ENCODE measurements at regions of chr7 and their contacts with region 1.

Region 1: GRCh38 chr7:80659120-80660055 is 20.9 kb downstream of the CD36 start:
- DNase-seq: no peak
- H3K4me3 ChIP-seq: no peak overlapping the region
- H3K4me3 Mint-ChIP-seq: no peak overlapping the region
- H3K27ac Mint-ChIP-seq: no peak overlapping the region
- H3K4me1 ChIP-seq: no peaks in the 10 kb centered on the region
- H3K4me1 Mint-ChIP-seq: no peaks in the 10 kb centered on the region
- H3K27me3 ChIP-seq: no peaks in the 10 kb centered on the region
- H3K27me3 Mint-ChIP-seq: peaks cover 13% of the 10 kb centered on the region
- CTCF ChIP-seq: peak; percentile 25 to 43

Region 2: GRCh38 chr7:80511964-80512363 is 147.4 kb before region 1 on chr7 and contains the start of gene GNAT3:
- CTCF ChIA-PET with region 1: no interaction called
- POLR2A ChIA-PET with region 1: no interaction called
- intact Hi-C with region 1: loop called (anchors 5 kb)
- DNase-seq: no peak
- H3K4me3 ChIP-seq: no peak within 1 kb of the TSS
- H3K4me3 Mint-ChIP-seq: no peak within 1 kb of the TSS
- H3K27ac Mint-ChIP-seq: no peak within 1 kb of the TSS
- H3K4me1 ChIP-seq: no peaks in the 10 kb centered on the region
- H3K4me1 Mint-ChIP-seq: no peaks in the 10 kb centered on the region
- H3K27me3 ChIP-seq: no peaks in the 10 kb centered on the region
- H3K27me3 Mint-ChIP-seq: peaks cover 7% of the 10 kb centered on the region
- CTCF ChIP-seq: no peak
- total RNA-seq, gene GNAT3: not detected in 2 replicates